Heart left ventricle (tissue), 16 donors: ENCODE measurements at regions of chr11 and their contacts with region 1.

Region 1: GRCh38 chr11:130448416-130449309 is at the start of gene ADAMTS15:
- DNase-seq: peak; percentile 87 to 96 (median 93)
- ATAC-seq: peak; percentile 76 to 87 (median 80)
- H3K4me3 ChIP-seq: peak within 1 kb of the TSS; percentile 63 to 88 (median 80)
- H3K27ac ChIP-seq: peak within 1 kb of the TSS; percentile 70 to 91 (median 80)
- H3K4me1 ChIP-seq: peaks cover 0 to 57% (median 41%) of the 10 kb centered on the region in 12 donors
- H3K27me3 ChIP-seq: peaks cover 0 to 21% (median 0%) of the 10 kb centered on the region in 9 donors
- CTCF ChIP-seq: peak in 1 of 12 donors; percentile 5
- POLR2A ChIP-seq: peak in 1 of 2 donors; percentile 72
- total RNA-seq, gene ADAMTS15: 5.3 to 36.5 (median 16.7) TPM

Region 2: DNA sequence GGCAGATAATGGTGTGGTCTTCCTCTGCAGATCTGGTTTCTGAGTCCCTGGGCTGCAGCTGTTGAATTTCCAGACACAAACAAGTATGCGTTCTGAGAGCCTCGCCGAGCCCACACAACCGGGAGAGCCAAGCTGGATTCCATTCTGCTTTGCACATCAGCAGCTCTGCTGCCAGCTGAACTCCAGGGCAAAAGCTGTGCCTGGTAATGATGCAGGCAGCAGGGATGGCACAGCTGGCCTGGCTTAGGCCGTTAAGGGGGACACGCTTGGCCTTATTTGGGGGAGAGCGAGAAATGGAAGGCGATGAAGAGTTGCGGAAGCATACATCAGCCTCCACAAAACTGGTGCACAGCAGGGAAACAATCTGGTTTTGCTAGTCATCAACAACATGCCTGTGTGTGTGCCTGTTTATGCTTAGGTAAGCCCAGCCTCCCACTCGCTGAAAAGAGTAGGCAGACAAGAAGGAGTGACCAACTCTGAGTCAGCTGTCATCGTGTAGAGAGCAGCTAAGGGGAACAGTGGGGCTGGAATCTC is 45.3 kb before region 1 on chr11:
- intact Hi-C with region 1: no loop called
- DNase-seq: peak; percentile 59 to 83 (median 74)
- ATAC-seq: peak; percentile 62 to 81 (median 76)
- H3K4me3 ChIP-seq: no peak overlapping the region
- H3K27ac ChIP-seq: peak overlapping the region in 11 of 12 donors; percentile 4 to 80 (median 56)
- H3K4me1 ChIP-seq: peaks cover 0 to 48% (median 21%) of the 10 kb centered on the region in 12 donors
- H3K27me3 ChIP-seq: no peaks in the 10 kb centered on the region
- CTCF ChIP-seq: no peak
- POLR2A ChIP-seq: no peak

Region 3: GRCh38 chr11:130465263-130465662 is 16.6 kb after region 1 on chr11:
- intact Hi-C with region 1: no loop called
- DNase-seq: no peak
- ATAC-seq: no peak
- H3K4me3 ChIP-seq: no peak overlapping the region
- H3K27ac ChIP-seq: no peak overlapping the region
- H3K4me1 ChIP-seq: peaks cover 0 to 6% (median 0%) of the 10 kb centered on the region in 12 donors
- H3K27me3 ChIP-seq: no peaks in the 10 kb centered on the region
- CTCF ChIP-seq: no peak
- POLR2A ChIP-seq: no peak

Region 4: DNA sequence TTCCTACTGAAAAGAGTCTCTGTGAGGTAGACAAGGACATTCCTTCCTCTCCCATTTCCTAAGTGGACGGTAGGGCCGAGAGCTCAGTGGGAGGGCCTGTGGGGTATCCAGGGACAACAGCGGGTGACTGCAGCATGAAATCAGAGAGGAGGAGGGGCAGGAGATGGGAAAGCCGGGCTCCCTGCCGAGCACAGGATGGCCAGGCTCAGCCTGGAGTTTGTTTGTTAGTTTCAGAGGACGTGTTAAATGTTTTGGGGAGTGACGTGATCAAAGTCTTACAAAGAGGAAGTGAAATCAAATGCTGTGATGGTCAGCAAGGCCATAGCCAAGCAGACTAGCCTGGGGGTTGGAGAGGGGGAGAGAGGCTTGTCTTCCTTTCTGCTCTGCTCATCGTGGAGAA is 152.5 kb after region 1 on chr11:
- intact Hi-C with region 1: loop called in 1 of 10 experiments (anchors 10 kb)
- DNase-seq: peak; percentile 67 to 89 (median 80)
- ATAC-seq: peak; percentile 90 to 98 (median 96)
- H3K4me3 ChIP-seq: no peak overlapping the region
- H3K27ac ChIP-seq: peak overlapping the region in 10 of 12 donors; percentile 28 to 62 (median 50)
- H3K4me1 ChIP-seq: peaks cover 0 to 27% (median 10%) of the 10 kb centered on the region in 12 donors
- H3K27me3 ChIP-seq: no peaks in the 10 kb centered on the region
- CTCF ChIP-seq: no peak
- POLR2A ChIP-seq: no peak

Region 5: GRCh38 chr11:130671801-130672700 is 223.4 kb after region 1 on chr11:
- intact Hi-C with region 1: loop called in 4 of 10 experiments (anchors 1 to 10 kb)
- DNase-seq: peak; percentile 59 to 87 (median 74)
- ATAC-seq: peak; percentile 66 to 79 (median 76)
- H3K4me3 ChIP-seq: no peak overlapping the region
- H3K27ac ChIP-seq: peak overlapping the region in 10 of 12 donors; percentile 12 to 86 (median 36)
- H3K4me1 ChIP-seq: peaks cover 0 to 50% (median 36%) of the 10 kb centered on the region in 12 donors
- H3K27me3 ChIP-seq: no peaks in the 10 kb centered on the region
- CTCF ChIP-seq: no peak
- POLR2A ChIP-seq: no peak

Region 6: GRCh38 chr11:130726234-130727037 is 277.8 kb after region 1 on chr11:
- intact Hi-C with region 1: loop called in 4 of 10 experiments (anchors 5 to 10 kb)
- DNase-seq: peak; percentile 51 to 72 (median 64)
- ATAC-seq: peak; percentile 76 to 94 (median 90)
- H3K4me3 ChIP-seq: no peak overlapping the region
- H3K27ac ChIP-seq: peak overlapping the region in 9 of 12 donors; percentile 47 to 75 (median 60)
- H3K4me1 ChIP-seq: peaks cover 5 to 35% (median 28%) of the 10 kb centered on the region in 12 donors
- H3K27me3 ChIP-seq: no peaks in the 10 kb centered on the region
- CTCF ChIP-seq: no peak
- POLR2A ChIP-seq: no peak

Region 7: DNA sequence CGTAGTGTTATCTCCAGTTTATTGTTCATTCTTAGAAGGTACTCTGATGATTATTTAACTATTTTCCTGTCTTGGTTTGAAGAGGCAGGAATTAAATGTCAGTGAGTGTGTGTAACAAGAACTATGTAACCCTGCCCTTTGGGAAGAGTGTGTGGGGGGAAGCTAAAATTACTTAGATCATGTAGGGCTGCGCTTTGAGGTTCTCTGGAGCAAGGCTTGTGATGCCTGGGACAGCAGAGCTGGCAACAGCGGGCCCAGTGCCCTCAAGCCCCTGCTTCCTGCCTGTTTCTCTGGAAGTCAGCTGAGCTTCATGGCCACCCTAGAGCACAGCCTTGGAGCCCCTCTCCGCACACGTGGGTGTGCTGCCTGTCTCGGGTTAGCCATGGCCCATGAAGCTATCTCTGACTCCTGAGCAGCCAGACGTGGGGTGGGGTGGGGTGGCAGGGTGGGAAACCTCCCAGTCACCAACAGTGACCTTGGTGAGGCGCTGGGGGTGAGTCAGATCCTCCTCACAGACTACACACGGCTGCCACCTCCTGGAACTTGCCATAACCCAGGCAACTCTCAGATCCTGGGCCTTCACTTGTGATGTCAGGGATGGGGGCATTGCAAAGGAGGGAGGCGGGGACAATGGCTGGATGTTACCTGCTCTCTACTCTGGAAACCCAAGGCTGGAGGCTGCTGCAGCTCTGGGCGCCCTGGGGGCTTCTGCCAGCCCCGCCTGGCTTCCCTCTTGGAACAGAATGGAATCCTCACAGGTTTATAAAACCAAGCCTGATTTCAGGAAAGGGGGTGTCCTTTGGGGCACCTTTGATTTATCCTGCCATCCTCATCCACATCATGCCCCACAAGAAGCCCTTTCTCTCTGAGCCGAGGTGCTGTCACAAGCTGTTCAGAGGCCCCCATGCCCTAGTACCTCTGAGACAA is 379.1 kb after region 1 on chr11:
- intact Hi-C with region 1: loop called in 7 of 10 experiments (anchors 1 to 5 kb)
- DNase-seq: peak in 4 of 5 donors; percentile 63 to 86 (median 79)
- ATAC-seq: peak; percentile 83 to 94 (median 91)
- H3K4me3 ChIP-seq: no peak overlapping the region
- H3K27ac ChIP-seq: peak overlapping the region in 10 of 12 donors; percentile 24 to 73 (median 58)
- H3K4me1 ChIP-seq: peaks cover 0 to 42% (median 25%) of the 10 kb centered on the region in 12 donors
- H3K27me3 ChIP-seq: no peaks in the 10 kb centered on the region
- CTCF ChIP-seq: peak; percentile 13 to 62 (median 48)
- POLR2A ChIP-seq: no peak